ENCODE measurements at regions of chr14 and their contacts with region 1.

Region 1: DNA sequence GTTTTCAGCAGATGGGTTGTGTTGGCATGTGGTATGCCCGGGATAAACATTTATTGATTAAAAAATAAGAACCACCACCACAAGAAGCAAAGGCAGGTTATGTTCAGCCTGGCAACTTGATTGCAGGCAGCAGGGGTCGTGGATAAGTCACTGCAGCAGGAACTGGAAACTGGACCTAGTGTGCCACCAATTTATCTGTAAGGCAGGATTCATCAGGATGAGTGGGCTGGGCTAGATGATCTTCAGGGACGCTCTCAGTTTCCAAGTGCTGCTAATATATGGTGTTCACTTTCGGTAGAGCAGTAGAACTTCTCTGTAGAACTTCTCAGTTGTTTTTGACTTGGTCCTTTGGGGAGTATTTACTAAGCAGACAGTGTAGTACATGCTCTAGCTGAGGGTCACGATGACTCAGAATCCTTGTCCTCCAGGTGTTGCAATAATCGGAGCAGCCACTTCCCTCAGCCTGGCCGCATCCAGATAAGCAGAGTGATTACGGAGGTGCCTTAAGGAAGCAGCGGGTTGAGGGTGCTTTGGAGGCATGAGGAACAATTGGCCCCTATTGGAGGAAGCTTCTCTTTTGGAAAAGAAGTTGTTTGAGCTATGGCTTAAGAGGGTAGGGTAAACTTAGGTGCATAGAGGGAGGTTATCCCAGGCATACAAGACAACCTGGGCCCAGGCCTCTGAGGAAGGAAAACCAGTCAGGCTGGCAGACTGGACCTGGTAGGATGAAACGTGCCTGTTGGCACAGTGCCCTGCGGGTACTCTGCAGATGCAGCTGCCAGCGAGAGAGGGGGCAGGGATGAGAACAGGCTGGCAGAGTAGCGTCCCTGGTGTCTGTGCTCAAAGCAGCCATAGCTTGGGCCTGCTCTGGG is 104.0 kb downstream of the GPR135 start:
- DNase-seq: peak; percentile 90
- H3K4me3 ChIP-seq: no peak overlapping the region
- H3K27ac ChIP-seq: peak overlapping the region; percentile 94
- H3K4me1 ChIP-seq: peaks cover 75% of the 10 kb centered on the region
- H3K27me3 ChIP-seq: no peaks in the 10 kb centered on the region
- CTCF ChIP-seq: peak in 1 of 2 donors; percentile 10

Region 2: GRCh38 chr14:59189786-59190771 is 171.1 kb before region 1 on chr14:
- CTCF ChIA-PET with region 1: no interaction called
- dilution Hi-C with region 1: no loop called
- in situ Hi-C with region 1: no loop called
- intact Hi-C with region 1: loop called (anchors 2 kb)
- DNase-seq: peak; percentile 89
- H3K4me3 ChIP-seq: peak overlapping the region; percentile 74 to 91 (median 82)
- H3K27ac ChIP-seq: peak overlapping the region; percentile 94
- H3K4me1 ChIP-seq: peaks cover 24% of the 10 kb centered on the region
- H3K27me3 ChIP-seq: no peaks in the 10 kb centered on the region
- CTCF ChIP-seq: peak in 1 of 2 donors; percentile 26

Region 3: DNA sequence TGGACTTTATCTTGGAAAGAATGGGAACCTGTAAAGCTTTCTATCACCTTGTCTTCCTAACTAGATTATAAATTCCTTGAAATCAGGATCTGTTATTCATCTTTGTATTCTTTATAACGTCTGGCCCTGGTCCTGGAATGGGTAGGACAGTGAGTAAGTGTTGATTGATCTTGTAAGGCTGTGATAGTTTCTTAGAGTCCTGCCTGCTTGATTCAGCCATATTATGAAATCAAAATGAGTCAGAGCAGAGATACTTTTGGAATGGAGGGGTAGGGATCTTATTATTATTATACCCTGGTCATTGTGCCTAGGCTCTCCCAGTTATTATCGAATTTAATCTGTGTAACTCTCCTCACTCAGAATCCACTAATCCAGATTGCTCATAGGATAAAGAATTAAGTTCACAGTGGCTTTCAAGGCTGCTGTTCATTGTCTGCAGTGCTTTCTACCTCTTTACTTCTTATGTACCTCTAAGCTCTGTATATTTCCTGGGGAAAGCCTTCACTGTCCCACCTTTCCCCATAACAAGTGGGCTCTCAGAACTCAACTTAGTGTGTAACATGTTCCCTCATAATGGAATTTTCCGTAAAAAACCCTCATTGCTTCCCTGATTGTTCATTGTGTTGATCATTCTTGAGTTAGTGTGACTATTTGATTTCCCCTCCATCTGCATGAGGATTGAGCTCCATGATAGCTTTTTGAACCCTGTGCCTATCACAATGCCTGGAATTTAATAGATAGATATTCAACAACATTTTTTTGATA is 79.4 kb before region 1 on chr14:
- CTCF ChIA-PET with region 1: no interaction called
- dilution Hi-C with region 1: loop called (anchors 5 kb)
- in situ Hi-C with region 1: loop called in 1 of 2 experiments (anchors 10 kb)
- intact Hi-C with region 1: loop called (anchors 2 kb)
- DNase-seq: peak; percentile 83
- H3K4me3 ChIP-seq: no peak overlapping the region
- H3K27ac ChIP-seq: peak overlapping the region; percentile 95
- H3K4me1 ChIP-seq: peaks cover 56% of the 10 kb centered on the region
- H3K27me3 ChIP-seq: no peaks in the 10 kb centered on the region
- CTCF ChIP-seq: no peak

Region 4: DNA sequence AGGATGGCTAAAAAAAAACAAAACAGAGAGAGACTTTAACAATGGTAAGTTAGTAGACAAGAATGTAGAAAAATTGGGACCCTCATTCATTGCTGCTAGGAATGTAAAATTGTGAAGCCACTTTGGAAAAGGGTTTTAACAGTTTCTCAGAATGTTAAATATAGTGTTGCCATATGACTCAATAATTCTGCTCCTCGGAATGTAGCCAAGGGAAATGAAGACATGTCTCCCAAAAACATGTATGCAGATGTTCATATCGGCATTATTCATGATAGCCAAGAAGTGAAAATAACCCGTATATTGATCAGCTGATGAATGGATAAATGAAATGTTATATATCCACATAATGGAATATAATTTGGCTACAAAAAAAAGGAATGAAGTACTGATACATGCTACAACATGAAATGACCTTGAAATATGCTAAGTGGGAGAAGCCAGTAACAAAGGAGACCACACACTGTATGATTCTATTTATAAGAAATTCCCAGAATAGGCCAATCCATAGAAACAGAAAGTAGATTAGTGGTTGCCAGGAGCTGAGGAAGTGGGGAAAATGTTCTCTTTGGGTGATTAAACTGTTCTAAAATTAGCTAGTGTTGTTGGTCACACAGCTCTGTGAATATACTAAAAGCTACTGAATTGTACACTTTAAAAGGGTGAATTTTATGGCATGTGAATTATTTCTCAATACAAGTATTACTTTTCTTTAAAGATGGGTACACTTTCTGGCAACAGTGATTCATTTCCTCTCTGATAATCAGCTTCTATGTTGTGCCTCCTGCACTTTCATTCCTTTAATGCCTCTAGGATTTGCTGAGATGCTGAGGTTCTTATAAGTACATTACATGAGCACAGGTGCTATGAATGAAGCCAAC is 40.2 kb before region 1 on chr14:
- CTCF ChIA-PET with region 1: no interaction called
- dilution Hi-C with region 1: no loop called
- in situ Hi-C with region 1: no loop called
- intact Hi-C with region 1: loop called (anchors 5 kb)
- DNase-seq: peak; percentile 72
- H3K4me3 ChIP-seq: no peak overlapping the region
- H3K27ac ChIP-seq: peak overlapping the region; percentile 51
- H3K4me1 ChIP-seq: peaks cover 17% of the 10 kb centered on the region
- H3K27me3 ChIP-seq: no peaks in the 10 kb centered on the region
- CTCF ChIP-seq: no peak

Region 5: DNA sequence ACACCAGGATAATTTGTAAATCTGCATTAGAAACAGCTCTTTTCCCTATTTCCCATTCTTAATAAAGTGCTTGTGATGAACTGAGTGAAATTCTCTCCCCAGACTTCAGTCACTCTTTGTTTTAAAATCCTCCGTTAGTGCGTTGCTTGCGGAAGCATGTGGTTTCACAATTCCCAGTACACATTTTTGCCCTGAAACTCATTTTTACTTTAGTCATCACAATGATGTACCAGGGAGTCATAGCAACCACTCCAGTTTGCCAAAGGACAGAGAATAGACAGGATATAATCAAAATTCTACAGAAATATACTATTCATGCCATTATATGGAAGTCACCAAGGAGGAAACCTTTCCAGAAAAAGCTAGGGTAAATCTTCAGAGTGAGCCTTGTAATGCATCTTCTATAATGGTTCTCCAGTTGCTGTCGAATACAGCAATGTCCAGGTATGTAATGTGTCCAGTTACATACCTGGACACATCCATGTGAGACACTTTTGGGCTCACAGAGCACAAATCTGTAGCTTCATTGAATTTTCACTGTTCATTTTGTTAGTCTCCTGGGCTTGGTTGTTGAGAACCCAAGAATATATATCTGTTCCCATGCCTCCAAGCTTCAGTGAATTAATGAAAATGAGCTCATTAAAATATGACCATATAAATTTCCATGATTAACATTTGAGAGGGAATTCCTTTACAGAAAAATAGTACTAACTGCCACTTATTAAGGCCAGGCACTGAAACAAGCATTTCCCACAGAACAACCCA is 46.3 kb after region 1 on chr14:
- CTCF ChIA-PET with region 1: no interaction called
- dilution Hi-C with region 1: loop called (anchors 5 kb)
- in situ Hi-C with region 1: no loop called
- intact Hi-C with region 1: loop called (anchors 2 kb)
- DNase-seq: peak; percentile 86
- H3K4me3 ChIP-seq: peak overlapping the region in 2 of 3 experiments; percentile 14 to 30
- H3K27ac ChIP-seq: peak overlapping the region; percentile 99
- H3K4me1 ChIP-seq: peaks cover 18% of the 10 kb centered on the region
- H3K27me3 ChIP-seq: no peaks in the 10 kb centered on the region
- CTCF ChIP-seq: no peak

Region 6: DNA sequence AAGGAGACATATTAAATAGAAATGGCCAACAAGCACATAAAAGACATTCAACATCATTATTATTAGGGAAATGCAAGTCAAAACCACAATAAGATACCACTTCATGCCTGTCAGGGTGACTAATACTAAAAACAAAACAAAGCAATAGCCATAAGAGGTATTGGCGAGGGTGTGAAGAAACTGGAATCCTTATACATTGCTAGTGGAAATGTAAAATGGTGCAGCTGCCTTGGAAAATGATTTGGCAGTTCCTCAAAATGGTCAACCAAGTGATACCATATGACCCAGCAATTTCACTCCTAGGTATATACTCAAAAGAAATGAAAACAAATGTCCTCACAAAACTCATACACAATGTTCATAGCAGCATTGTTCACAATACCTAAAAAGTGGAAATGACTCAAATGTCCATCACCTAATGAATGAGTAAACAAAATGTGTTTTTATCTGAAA is 77.1 kb after region 1 on chr14:
- CTCF ChIA-PET with region 1: no interaction called
- dilution Hi-C with region 1: no loop called
- in situ Hi-C with region 1: no loop called
- intact Hi-C with region 1: loop called (anchors 5 kb)
- DNase-seq: peak; percentile 74
- H3K4me3 ChIP-seq: no peak overlapping the region
- H3K27ac ChIP-seq: no peak overlapping the region
- H3K4me1 ChIP-seq: peaks cover 16% of the 10 kb centered on the region
- H3K27me3 ChIP-seq: no peaks in the 10 kb centered on the region
- CTCF ChIP-seq: no peak